ENCODE measurements at regions of chr1 and their contacts with region 1.

Region 1: GRCh38 chr1:34597877-34598514 is 156.9 kb upstream of the GJB5 start:
- DNase-seq: peak; percentile 71
- H3K4me3 Mint-ChIP-seq: no peak overlapping the region
- H3K27ac Mint-ChIP-seq: no peak overlapping the region
- H3K4me1 Mint-ChIP-seq: no peaks in the 10 kb centered on the region
- H3K27me3 Mint-ChIP-seq: peaks cover 12% of the 10 kb centered on the region

Region 2: GRCh38 chr1:34460193-34460592 is 137.8 kb before region 1 on chr1:
- CTCF ChIA-PET with region 1: interaction called, 21 read pairs
- POLR2A ChIA-PET with region 1: no interaction called
- intact Hi-C with region 1: loop called (anchors 1 kb)
- DNase-seq: peak; percentile 55
- H3K4me3 Mint-ChIP-seq: no peak overlapping the region
- H3K27ac Mint-ChIP-seq: no peak overlapping the region
- H3K4me1 Mint-ChIP-seq: no peaks in the 10 kb centered on the region
- H3K27me3 Mint-ChIP-seq: peaks cover 9% of the 10 kb centered on the region

Measured in activated CD4-positive, alpha-beta memory T cell treated with anti-CD3 and anti-CD28 coated beads for 36 hours (primary cell).